Mammary epithelial cell (primary cell): ENCODE measurements at regions of chrX and their contacts with region 1.

Region 1: GRCh38 chrX:29687687-29688086 is 527.7 kb upstream of the MAGEB2 start:
- DNase-seq: peak; percentile 49
- H3K4me3 ChIP-seq: no peak overlapping the region
- H3K27ac ChIP-seq: no peak overlapping the region
- H3K4me1 ChIP-seq: no peaks in the 10 kb centered on the region
- H3K27me3 ChIP-seq: no peaks in the 10 kb centered on the region
- CTCF ChIP-seq: peak in 1 of 2 donors; percentile 44

Region 2: DNA sequence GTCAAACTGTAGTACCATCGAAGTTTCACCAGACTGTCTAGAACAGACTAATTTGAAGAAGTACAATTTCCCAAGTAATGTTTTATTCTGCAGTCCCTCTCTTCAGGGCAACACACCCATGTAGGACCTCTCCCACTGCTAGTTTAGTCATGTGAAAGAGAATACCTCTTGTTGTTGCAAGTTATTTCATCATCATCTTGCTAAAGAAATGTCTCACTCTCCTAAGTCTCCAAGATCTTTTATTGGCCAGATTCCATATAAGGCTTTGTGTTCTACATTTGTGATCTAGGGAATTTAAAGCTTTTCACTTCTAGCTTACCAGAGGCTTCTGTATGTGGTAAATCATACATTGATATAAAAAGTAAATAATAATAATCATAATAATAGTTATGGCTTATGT is 217.7 kb before region 1 on chrX:
- CTCF ChIA-PET with region 1: no interaction called
- dilution Hi-C with region 1: no loop called
- in situ Hi-C with region 1: no loop called
- intact Hi-C with region 1: no loop called
- DNase-seq: peak; percentile 35
- H3K4me3 ChIP-seq: no peak overlapping the region
- H3K27ac ChIP-seq: no peak overlapping the region
- H3K4me1 ChIP-seq: no peaks in the 10 kb centered on the region
- H3K27me3 ChIP-seq: no peaks in the 10 kb centered on the region
- CTCF ChIP-seq: no peak

Region 3: DNA sequence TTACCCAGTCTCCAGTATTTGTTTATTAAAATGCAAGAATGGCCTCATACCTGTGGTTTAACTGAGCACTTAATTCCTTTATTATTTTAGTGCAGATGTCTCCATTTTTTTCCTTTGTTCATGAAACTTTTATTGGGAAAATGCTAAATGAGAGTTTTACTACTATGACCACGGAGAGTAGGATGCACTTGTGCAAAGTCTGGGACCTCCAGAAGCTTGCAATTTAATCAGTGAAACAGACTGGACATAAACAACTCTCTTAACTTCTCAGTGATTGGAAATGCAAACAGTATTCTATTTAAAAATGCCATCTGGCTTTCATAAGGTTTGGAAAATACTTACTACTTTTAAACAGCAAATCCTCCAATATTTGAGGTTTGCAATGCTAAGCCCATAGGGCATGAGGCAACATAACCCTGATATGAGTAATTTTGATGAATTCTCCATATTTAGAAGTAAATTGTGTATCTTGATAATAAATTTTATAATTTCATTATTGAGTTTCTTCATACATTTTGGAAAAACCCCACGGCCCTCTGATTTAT is 191.0 kb before region 1 on chrX:
- CTCF ChIA-PET with region 1: no interaction called
- dilution Hi-C with region 1: no loop called
- in situ Hi-C with region 1: no loop called
- intact Hi-C with region 1: no loop called
- DNase-seq: no peak
- H3K4me3 ChIP-seq: no peak overlapping the region
- H3K27ac ChIP-seq: no peak overlapping the region
- H3K4me1 ChIP-seq: no peaks in the 10 kb centered on the region
- H3K27me3 ChIP-seq: no peaks in the 10 kb centered on the region
- CTCF ChIP-seq: no peak

Region 4: GRCh38 chrX:29787656-29788055 is 100.0 kb after region 1 on chrX:
- CTCF ChIA-PET with region 1: no interaction called
- dilution Hi-C with region 1: no loop called
- in situ Hi-C with region 1: no loop called
- intact Hi-C with region 1: no loop called
- DNase-seq: no peak
- H3K4me3 ChIP-seq: no peak overlapping the region
- H3K27ac ChIP-seq: no peak overlapping the region
- H3K4me1 ChIP-seq: no peaks in the 10 kb centered on the region
- H3K27me3 ChIP-seq: no peaks in the 10 kb centered on the region
- CTCF ChIP-seq: no peak

Region 5: GRCh38 chrX:29903360-29903759 is 215.7 kb after region 1 on chrX:
- CTCF ChIA-PET with region 1: interaction called, 3 read pairs
- dilution Hi-C with region 1: no loop called
- in situ Hi-C with region 1: no loop called
- intact Hi-C with region 1: loop called (anchors 1 kb)
- DNase-seq: no peak
- H3K4me3 ChIP-seq: no peak overlapping the region
- H3K27ac ChIP-seq: no peak overlapping the region
- H3K4me1 ChIP-seq: no peaks in the 10 kb centered on the region
- H3K27me3 ChIP-seq: no peaks in the 10 kb centered on the region
- CTCF ChIP-seq: peak; percentile 34 to 51

Region 6: GRCh38 chrX:30060718-30061117 is 373.0 kb after region 1 on chrX:
- CTCF ChIA-PET with region 1: no interaction called
- dilution Hi-C with region 1: no loop called
- in situ Hi-C with region 1: no loop called
- intact Hi-C with region 1: loop called (anchors 5 kb)
- DNase-seq: peak; percentile 1
- H3K4me3 ChIP-seq: no peak overlapping the region
- H3K27ac ChIP-seq: no peak overlapping the region
- H3K4me1 ChIP-seq: no peaks in the 10 kb centered on the region
- H3K27me3 ChIP-seq: no peaks in the 10 kb centered on the region
- CTCF ChIP-seq: peak; percentile 41 to 69

Region 7: DNA sequence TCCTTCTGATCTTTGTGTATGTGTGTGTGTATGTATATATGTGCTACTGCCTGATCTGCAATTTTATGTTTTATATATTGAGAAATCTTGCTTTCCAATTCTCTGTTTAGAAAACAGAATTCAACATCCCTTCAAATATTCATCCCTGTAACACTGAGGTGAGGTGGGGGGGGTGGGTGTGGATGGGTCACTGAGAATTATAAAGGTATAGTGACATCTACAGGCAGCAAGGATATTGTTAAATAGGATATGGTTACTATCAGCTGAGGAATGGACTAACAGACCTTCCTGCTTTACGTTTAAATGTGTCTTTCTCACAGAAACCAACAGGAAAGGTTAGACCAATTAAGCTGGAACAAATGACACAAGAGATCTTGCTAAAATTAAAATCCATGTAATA is 508.6 kb after region 1 on chrX:
- CTCF ChIA-PET with region 1: no interaction called
- dilution Hi-C with region 1: no loop called
- in situ Hi-C with region 1: no loop called
- intact Hi-C with region 1: loop called (anchors 5 kb)
- DNase-seq: peak; percentile 1
- H3K4me3 ChIP-seq: no peak overlapping the region
- H3K27ac ChIP-seq: no peak overlapping the region
- H3K4me1 ChIP-seq: no peaks in the 10 kb centered on the region
- H3K27me3 ChIP-seq: no peaks in the 10 kb centered on the region
- CTCF ChIP-seq: peak; percentile 10 to 31

Region 8: DNA sequence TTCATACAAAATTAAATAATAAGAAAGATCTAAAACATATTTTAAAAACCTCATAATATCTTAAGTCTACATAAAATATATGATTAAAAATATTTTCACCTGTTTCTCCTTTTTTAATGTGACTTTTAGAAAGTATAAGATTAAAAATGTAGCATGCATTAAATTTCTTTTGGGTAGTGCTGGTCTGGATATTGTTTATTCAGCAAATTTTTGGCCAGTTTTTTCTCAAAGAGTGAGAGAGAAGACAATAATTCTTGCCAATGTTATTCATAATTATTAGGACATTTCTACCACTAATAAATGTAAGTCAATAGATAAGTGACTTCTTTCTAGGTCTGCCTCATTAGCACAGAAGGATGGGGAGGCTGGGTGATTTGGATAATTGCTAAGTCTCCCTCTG is 573.3 kb after region 1 on chrX:
- CTCF ChIA-PET with region 1: no interaction called
- dilution Hi-C with region 1: no loop called
- in situ Hi-C with region 1: no loop called
- intact Hi-C with region 1: no loop called
- DNase-seq: no peak
- H3K4me3 ChIP-seq: no peak overlapping the region
- H3K27ac ChIP-seq: no peak overlapping the region
- H3K4me1 ChIP-seq: no peaks in the 10 kb centered on the region
- H3K27me3 ChIP-seq: peaks cover 12% of the 10 kb centered on the region
- CTCF ChIP-seq: no peak